ENCODE measurements at regions of chr17 and their contacts with region 1.

Region 1: DNA sequence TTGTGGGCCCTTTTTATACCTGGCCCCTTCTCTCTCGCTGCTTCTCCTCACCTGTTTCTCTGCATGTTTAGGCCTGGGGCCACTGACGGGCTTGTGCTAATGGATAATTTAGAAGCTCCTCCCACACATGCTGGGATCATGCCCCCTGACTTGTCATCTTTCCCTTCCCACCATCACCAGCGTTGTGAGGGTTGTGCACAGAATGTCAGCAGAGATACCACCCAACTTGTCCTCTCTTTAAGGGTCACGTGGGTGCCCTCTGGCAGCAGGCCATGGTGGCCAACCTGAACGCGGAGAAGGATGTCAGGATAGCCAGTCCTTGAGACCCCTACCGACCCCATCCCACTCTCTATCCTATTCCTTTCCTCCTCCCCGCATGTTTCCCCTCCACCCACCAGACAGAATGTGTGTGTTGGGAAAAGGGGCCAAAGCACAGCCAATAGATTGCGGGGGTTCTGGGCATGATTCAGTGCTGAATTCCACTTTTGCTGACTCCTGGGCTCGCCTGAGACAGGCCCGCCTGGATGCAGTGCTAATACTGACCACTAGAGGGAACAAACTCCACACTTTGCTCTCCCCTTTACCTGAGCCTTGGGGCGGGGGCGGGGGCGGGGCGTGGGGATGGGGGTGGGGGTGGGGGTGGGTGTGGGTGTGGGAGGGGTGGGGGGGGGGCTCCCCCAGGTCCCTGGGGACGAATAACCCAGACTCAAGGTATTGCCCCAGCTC is at the start of gene GH2:
- DNase-seq: peak; percentile 77
- ATAC-seq: peak; percentile 99
- H3K4me3 Mint-ChIP-seq: no peak within 1 kb of the TSS
- H3K27ac Mint-ChIP-seq: no peak within 1 kb of the TSS
- H3K4me1 Mint-ChIP-seq: no peaks in the 10 kb centered on the region
- H3K27me3 Mint-ChIP-seq: no peaks in the 10 kb centered on the region
- CTCF ChIP-seq: peak; percentile 56
- total RNA-seq, gene GH2: not detected

Region 2: DNA sequence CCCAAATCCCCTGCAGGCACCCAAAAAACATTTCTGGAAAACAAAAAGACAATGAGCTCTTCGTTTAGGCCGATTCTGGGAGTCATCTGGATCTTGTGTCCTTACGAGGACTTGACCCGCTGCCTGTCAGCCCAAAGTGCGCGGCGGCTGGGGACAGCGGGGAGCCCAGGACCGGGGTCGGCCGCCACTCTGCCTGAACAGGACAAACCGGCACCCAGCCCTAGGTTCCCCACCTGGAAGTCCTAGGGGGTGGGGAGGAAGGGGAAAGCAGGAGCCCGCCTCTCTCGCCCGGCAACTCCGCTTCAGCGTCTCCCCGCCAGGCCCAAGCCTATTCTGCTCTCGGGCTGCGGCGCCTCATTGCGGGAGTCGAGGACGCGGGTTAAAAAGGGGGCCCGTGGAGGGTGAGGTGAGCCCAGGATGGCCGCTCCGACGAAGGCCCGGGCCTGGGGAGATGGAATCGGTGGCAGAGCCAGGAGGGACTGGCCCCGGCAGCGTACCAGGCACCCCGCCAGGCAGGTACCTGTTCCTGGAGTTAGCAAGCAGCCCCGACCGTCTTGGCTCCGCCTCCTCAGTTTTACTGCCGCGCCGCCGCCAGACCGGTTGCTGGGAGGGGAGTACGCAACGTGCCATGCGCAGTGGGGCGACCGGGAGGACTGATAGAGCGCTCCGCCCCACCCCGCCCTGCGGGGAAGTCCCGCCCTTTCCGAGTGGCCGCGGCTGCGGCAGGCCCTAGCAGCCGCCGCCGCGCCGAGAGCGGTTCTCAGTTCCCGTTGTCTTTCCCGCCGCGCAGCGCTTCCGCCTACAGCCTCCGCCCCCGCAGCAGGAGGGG is 140.6 kb before region 1 on chr17 and contains the start of gene STRADA:
- CTCF ChIA-PET with region 1: no interaction called
- POLR2A ChIA-PET with region 1: no interaction called
- intact Hi-C with region 1: no loop called
- DNase-seq: peak; percentile 99
- ATAC-seq: peak; percentile 96
- H3K4me3 Mint-ChIP-seq: peak within 1 kb of the TSS; percentile 94
- H3K27ac Mint-ChIP-seq: peak within 1 kb of the TSS; percentile 96
- H3K4me1 Mint-ChIP-seq: peaks cover 21% of the 10 kb centered on the region
- H3K27me3 Mint-ChIP-seq: no peaks in the 10 kb centered on the region
- CTCF ChIP-seq: no peak
- total RNA-seq, gene STRADA: 44.8 to 48.8 TPM

Region 3: DNA sequence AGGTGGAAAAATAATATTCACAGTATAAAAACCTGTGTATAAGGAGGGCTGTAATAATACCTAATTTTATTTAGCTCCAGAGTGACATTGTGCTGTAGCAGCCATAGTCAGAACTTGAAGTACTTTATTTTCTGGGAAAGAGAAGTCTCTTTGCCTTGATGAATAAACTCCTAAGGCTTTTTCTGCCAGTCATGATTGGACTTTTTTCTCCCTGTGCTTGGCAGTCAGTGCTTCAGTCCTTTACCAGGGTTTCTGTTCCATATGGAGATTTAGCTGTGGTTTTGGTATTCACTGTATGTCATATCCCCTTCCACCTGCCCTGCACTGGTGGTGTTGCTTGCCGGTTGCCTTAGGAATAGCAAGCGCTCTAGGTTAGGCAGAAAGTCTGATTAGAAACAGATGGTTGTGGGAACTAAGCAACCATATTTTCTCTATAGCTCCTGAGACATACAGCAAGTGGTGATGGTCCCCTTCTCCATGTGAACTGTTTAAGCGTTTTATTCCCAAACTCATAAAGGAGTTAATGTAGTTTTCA is 83.4 kb before region 1 on chr17:
- CTCF ChIA-PET with region 1: no interaction called
- POLR2A ChIA-PET with region 1: no interaction called
- intact Hi-C with region 1: no loop called
- DNase-seq: no peak
- ATAC-seq: no peak
- H3K4me3 Mint-ChIP-seq: no peak overlapping the region
- H3K27ac Mint-ChIP-seq: no peak overlapping the region
- H3K4me1 Mint-ChIP-seq: no peaks in the 10 kb centered on the region
- H3K27me3 Mint-ChIP-seq: no peaks in the 10 kb centered on the region
- CTCF ChIP-seq: no peak

Region 4: GRCh38 chr17:63904316-63904715 is 22.3 kb after region 1 on chr17:
- CTCF ChIA-PET with region 1: interaction called, 82 read pairs
- POLR2A ChIA-PET with region 1: no interaction called
- intact Hi-C with region 1: no loop called
- DNase-seq: no peak
- ATAC-seq: no peak
- H3K4me3 Mint-ChIP-seq: no peak overlapping the region
- H3K27ac Mint-ChIP-seq: no peak overlapping the region
- H3K4me1 Mint-ChIP-seq: peaks cover 8% of the 10 kb centered on the region
- H3K27me3 Mint-ChIP-seq: peaks cover 3% of the 10 kb centered on the region
- CTCF ChIP-seq: no peak

Region 5: DNA sequence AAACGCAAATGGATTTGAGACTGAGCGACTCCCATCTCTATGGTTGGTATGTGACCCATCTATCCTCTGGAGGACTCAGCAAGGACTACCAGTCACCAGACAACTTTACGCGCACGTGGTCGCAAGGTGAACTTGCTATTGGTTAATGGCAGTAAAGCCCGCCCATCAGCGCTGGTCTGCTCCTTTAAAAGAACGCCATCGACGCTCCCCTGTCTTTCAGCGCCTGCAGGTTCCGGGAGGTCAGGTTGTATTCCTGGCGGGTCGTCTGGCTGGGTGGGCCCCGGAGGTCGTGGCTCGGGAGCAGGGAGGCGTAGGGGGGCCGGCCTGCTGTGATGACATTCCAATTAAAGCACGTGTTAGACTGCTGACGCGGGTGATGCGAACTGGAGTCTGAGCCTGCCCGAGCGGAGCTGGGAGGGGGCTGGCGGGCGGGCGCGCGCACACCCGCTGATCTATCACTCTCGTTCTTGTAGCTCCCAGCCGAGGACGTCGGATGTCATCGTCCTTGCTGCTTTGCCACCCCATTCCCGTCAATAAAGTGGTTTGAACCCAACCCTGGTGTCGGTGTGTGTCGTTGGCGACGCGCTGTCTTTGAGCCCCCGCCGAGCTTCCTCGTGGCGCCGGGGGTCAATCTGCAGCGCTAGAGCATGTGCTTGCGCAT is 263.8 kb after region 1 on chr17:
- CTCF ChIA-PET with region 1: no interaction called
- POLR2A ChIA-PET with region 1: no interaction called
- intact Hi-C with region 1: no loop called
- DNase-seq: peak; percentile 98
- ATAC-seq: peak; percentile 96
- H3K4me3 Mint-ChIP-seq: no peak overlapping the region
- H3K27ac Mint-ChIP-seq: no peak overlapping the region
- H3K4me1 Mint-ChIP-seq: peaks cover 18% of the 10 kb centered on the region
- H3K27me3 Mint-ChIP-seq: no peaks in the 10 kb centered on the region
- CTCF ChIP-seq: no peak

Measured in activated CD8-positive, alpha-beta T cell treated with anti-CD3 and anti-CD28 coated beads for 36 hours (primary cell).